SK-N-SH (cell line): ENCODE measurements at regions of chr6 and their contacts with region 1.

Region 1: GRCh38 chr6:29976588-29977424 is 34.5 kb downstream of the HLA-A start:
- DNase-seq: peak; percentile 80
- H3K4me3 ChIP-seq: peak overlapping the region; percentile 59 to 61
- H3K27ac ChIP-seq: peak overlapping the region; percentile 65 to 79
- H3K4me1 ChIP-seq: peaks cover 0 to 18% of the 10 kb centered on the region in 2 experiments; a peak in 2 of 4 replicates
- H3K27me3 ChIP-seq: no peaks in the 10 kb centered on the region
- CTCF ChIP-seq: peak; percentile 37
- EP300 ChIP-seq: no peak
- RAD21 ChIP-seq: peak; percentile 31

Region 2: GRCh38 chr6:29964887-29965562 is 11.8 kb before region 1 on chr6:
- CTCF ChIA-PET with region 1: interaction called, 22 read pairs
- POLR2A ChIA-PET with region 1: interaction called, 15 read pairs
- DNase-seq: peak; percentile 65
- H3K4me3 ChIP-seq: peak overlapping the region; percentile 25 to 44
- H3K27ac ChIP-seq: peak overlapping the region; percentile 70 to 100
- H3K4me1 ChIP-seq: peaks cover 17 to 26% of the 10 kb centered on the region in 2 experiments; a peak in 3 of 4 replicates
- H3K27me3 ChIP-seq: no peaks in the 10 kb centered on the region
- CTCF ChIP-seq: no peak
- EP300 ChIP-seq: peak; percentile 57 to 63; a peak in 2 of 4 replicates
- RAD21 ChIP-seq: no peak